ENCODE measurements at regions of chr4 and their contacts with region 1.

Region 1: DNA sequence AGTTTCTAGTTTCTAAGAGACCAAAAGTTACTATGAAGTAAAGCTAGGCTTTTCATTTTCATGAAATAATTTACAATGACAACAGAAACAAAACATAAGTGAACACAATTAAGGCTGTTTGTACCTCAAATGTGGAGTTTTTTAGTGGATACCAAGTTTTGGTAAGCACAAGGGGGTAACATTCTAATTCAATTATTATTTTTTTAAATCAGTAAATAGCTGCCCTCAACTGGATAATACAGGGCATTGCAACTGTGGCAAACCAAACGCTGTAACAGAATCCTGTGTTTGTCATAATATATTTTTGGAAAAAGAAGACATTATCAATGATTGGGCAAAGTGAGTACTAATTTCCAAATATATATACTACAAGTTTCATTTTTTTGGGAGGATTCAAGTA is 150.3 kb downstream of the FBXW7 start:
- DNase-seq: peak; percentile 10
- H3K4me3 Mint-ChIP-seq: no peak overlapping the region
- H3K27ac Mint-ChIP-seq: no peak overlapping the region
- H3K4me1 Mint-ChIP-seq: peaks cover 13% of the 10 kb centered on the region
- H3K27me3 Mint-ChIP-seq: no peaks in the 10 kb centered on the region

Region 2: GRCh38 chr4:151362404-151363164 is 1023.0 kb before region 1 on chr4:
- CTCF ChIA-PET with region 1: no interaction called
- intact Hi-C with region 1: loop called (anchors 5 kb)
- DNase-seq: peak; percentile 90
- H3K4me3 Mint-ChIP-seq: no peak overlapping the region
- H3K27ac Mint-ChIP-seq: no peak overlapping the region
- H3K4me1 Mint-ChIP-seq: no peaks in the 10 kb centered on the region
- H3K27me3 Mint-ChIP-seq: no peaks in the 10 kb centered on the region

Region 3: DNA sequence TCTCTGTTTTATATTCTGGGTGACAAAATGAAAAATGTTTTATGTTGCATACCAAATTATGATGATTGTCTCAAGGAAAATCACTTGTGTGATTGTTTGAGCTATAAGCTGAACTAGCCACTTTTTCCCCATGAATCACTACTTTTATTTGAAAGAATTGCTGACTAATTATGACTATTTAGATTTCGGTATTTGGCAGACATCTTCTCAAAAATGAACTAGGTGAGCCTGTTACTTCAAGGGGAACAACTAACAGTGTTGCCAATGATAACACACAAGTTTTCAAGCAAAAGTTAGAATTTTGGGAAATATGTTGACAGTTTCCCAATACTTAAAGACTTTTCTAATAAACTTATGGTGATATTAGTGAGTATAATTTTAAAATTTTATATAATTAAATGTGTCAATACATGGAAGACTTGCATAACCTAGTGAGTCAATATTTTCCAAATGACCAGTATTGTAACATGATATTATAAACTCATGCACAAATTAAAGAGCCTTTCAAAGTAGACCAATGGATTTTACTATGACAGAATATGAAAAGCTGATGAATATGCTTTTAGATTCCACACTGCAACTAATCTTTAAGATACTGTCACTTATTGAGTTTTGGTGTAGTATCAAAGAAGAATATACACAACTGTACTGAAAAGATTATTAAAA is 437.1 kb before region 1 on chr4:
- CTCF ChIA-PET with region 1: no interaction called
- intact Hi-C with region 1: loop called (anchors 10 kb)
- DNase-seq: no peak
- H3K4me3 Mint-ChIP-seq: no peak overlapping the region
- H3K27ac Mint-ChIP-seq: no peak overlapping the region
- H3K4me1 Mint-ChIP-seq: no peaks in the 10 kb centered on the region
- H3K27me3 Mint-ChIP-seq: no peaks in the 10 kb centered on the region

Region 4: DNA sequence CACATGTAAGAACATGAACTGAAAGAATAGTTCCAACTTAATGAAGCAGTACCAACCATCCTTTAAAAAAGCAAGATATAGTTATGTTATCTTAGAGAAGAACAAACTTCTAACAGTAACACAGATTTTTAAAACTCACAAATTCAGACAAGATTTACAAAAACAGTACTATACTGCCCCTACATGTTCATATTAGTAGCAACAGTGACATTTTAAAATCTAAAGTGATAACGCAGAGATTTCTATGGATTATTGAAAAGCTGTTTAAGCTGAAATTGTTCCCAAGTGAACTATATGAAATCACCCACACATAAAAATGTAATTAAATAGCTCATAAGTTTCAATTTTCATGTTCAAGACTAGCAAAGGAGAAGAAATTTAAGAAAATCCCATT is 15.7 kb before region 1 on chr4:
- CTCF ChIA-PET with region 1: no interaction called
- intact Hi-C with region 1: loop called (anchors 1 kb)
- DNase-seq: no peak
- H3K4me3 Mint-ChIP-seq: no peak overlapping the region
- H3K27ac Mint-ChIP-seq: no peak overlapping the region
- H3K4me1 Mint-ChIP-seq: peaks cover 22% of the 10 kb centered on the region
- H3K27me3 Mint-ChIP-seq: no peaks in the 10 kb centered on the region